Cardiac septum (tissue), 1 donor: ENCODE measurements at regions of chr12 and their contacts with region 1.

Region 1: DNA sequence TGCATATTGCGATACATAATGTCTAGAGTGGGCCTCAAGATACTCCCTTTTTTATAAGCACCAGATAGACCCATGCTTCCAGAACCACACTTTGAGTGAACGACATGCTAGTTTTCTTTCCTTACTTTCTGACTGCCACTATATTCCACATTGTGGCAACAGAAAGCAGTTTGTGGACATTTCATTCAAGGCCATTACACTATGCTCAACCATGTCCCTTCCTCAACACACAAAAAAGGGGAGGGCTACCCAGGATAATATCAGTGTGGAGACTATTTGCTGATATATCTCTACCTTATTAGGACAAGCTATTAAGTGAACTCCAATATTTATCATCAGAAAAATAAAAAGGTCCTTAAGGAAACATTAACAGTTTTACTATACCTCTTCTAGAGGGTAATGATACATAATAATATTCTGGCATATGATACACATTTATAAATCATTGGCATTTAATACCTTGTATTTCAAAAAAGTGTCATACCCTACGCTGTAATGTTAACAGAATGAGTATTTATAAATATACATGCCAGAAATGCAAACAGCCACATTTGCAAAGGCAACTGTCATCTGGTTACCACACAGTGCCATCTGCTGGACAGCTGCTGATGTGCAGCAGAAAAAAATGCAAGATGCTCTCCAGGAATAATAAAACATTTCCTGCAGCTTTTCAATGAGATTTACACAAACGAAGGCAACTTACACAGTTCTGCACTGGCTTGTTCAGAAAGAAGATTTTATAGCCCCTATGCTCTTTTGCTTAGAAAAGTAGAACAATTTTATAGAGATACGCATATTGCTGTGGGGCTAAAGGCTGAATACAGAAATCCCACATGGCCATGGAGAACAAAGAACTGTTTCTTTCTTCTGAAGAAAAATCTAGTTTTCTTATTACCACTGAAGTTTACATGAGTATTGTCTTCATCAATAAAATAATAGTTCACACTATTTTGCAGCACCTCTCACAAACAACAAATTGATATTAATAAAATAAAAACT is 182.2 kb upstream of the GRIP1 start:
- DNase-seq: no peak

Region 2: DNA sequence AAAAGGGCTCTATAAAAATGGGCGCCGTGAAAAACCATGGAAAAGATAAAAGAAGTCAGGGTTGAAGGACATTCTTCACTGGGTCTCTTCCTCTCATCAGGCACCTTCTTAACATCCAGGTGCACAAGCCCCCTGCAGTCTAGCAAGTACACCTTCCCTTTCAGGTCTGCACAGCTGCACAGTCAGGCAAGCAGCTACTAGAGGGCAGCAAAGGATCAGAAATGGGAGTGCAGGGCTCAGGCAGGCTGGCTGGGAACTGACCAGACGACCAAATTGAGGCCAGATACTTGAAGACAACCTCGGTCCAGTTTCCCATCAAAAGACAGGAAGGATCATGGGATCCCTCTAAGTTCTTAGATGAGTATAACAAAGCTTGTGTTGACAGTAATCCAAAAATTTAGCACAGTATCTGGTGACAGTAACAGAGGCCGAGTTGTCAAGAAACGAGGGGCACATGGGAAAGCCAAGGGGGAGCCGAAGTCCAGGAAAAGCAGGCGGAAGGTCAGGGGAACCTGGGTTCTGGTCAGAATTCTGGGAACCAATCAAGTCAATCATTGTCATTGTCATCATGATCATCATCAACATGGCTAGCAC is 172.1 kb before region 1 on chr12:
- intact Hi-C with region 1: loop called (anchors 2 kb)
- DNase-seq: no peak